A673 (cell line): ENCODE measurements at regions of chr2 and their contacts with region 1.

Region 1: GRCh38 chr2:194343167-194343566 is 1313.9 kb upstream of the SLC39A10 start:
- DNase-seq: no peak
- H3K4me3 ChIP-seq: no peak overlapping the region
- H3K27ac ChIP-seq: no peak overlapping the region
- H3K4me1 ChIP-seq: peaks cover 6% of the 10 kb centered on the region
- H3K27me3 ChIP-seq: no peaks in the 10 kb centered on the region
- CTCF ChIP-seq: no peak

Region 2: DNA sequence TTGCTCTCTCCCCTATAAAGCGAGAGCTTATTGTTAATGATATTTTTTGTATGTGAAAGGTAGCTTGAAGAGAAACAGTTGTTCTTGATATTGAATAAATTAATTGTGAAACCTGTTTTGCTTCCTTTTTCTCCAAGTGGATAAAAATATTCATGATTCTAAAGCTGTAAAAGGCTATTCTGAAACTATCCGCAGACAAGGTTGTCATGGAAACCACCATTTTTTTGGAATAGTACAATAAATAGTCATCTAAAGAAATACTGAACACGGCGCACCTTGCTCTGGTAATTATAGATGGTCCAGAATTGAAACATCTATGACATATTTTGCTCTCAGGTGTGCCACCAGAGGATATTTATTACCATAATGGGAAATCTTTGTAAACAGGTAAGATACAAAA is 210.8 kb after region 1 on chr2:
- CTCF ChIA-PET with region 1: no interaction called
- POLR2A ChIA-PET with region 1: interaction called, 14 read pairs
- intact Hi-C with region 1: no loop called
- DNase-seq: no peak
- H3K4me3 ChIP-seq: no peak overlapping the region
- H3K27ac ChIP-seq: no peak overlapping the region
- H3K4me1 ChIP-seq: no peaks in the 10 kb centered on the region
- H3K27me3 ChIP-seq: no peaks in the 10 kb centered on the region
- CTCF ChIP-seq: no peak

Region 3: GRCh38 chr2:194686569-194686968 is 343.4 kb after region 1 on chr2:
- CTCF ChIA-PET with region 1: no interaction called
- POLR2A ChIA-PET with region 1: no interaction called
- intact Hi-C with region 1: loop called (anchors 5 kb)
- DNase-seq: no peak
- H3K4me3 ChIP-seq: no peak overlapping the region
- H3K27ac ChIP-seq: no peak overlapping the region
- H3K4me1 ChIP-seq: no peaks in the 10 kb centered on the region
- H3K27me3 ChIP-seq: no peaks in the 10 kb centered on the region
- CTCF ChIP-seq: no peak